ENCODE measurements at regions of chr7 and their contacts with region 1.

Region 1: GRCh38 chr7:117068511-117069145 is 115.3 kb downstream of the ST7 start:
- DNase-seq: peak in 4 of 6 donors; percentile 27 to 42 (median 31)
- ATAC-seq: peak; percentile 48 to 75 (median 64)
- H3K4me3 ChIP-seq: no peak overlapping the region
- H3K27ac ChIP-seq: peak overlapping the region in 1 of 4 donors; percentile 13
- H3K4me1 ChIP-seq: peaks cover 9 to 33% (median 30%) of the 10 kb centered on the region in 3 donors
- H3K27me3 ChIP-seq: no peaks in the 10 kb centered on the region
- CTCF ChIP-seq: no peak

Region 2: GRCh38 chr7:117004899-117005298 is 63.7 kb before region 1 on chr7:
- intact Hi-C with region 1: loop called in 1 of 3 experiments (anchors 5 kb)
- DNase-seq: no peak
- ATAC-seq: no peak
- H3K4me3 ChIP-seq: no peak overlapping the region
- H3K27ac ChIP-seq: no peak overlapping the region
- H3K4me1 ChIP-seq: peaks cover 0 to 4% (median 3%) of the 10 kb centered on the region in 3 donors
- H3K27me3 ChIP-seq: no peaks in the 10 kb centered on the region
- CTCF ChIP-seq: no peak

Measured in pancreas (tissue), 10 donors.